ENCODE measurements at regions of chr5 and their contacts with region 1.

Region 1: DNA sequence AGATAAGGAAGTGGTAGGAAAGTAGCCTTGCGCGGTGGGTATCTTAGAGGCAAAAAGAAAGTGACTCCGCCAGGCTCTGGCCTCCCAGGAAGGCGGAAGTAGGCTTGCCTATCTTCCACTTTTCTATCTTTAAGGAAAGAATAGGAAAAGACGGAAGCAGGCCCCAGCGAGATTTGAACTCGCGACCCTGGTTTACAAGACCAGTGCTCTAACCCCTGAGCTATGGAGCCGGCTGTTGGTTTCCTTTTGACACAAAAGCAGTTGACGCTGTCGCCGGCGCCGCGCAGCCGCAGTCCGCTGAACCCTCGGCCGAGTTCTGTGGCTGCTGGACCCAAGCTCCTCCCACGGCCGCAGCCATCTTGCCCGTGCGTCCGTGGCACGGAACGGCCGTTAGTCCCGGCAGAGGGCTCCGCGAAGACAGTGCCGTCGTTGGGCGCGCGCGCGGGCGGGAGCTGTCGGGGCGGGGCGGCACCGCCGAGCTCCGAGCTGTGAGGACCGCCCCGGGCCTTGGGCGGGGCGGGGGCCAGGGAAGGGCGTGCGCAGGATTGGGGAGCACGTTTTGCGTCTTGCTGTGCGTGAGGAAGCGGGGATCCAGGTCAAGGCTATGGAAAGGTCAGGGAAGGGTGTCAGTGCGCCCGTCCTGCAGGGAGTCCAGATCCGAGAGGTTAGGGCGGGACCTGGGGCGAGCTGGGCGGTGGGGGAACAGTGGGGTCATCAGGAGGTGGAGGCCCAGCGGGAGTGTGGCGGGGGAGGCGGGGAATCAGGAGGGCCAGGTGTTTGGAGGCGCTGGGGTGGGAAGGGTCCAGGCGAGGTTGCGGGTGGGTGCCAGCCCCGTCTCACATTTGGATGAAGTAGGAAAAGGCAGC is 13.2 kb downstream of the TRIM7 start:
- DNase-seq: peak; percentile 94
- ATAC-seq: peak; percentile 77
- H3K4me3 ChIP-seq: peak overlapping the region; percentile 65
- H3K27ac ChIP-seq: peak overlapping the region; percentile 91
- H3K4me1 ChIP-seq: peaks cover 4% of the 10 kb centered on the region
- H3K27me3 ChIP-seq: no peaks in the 10 kb centered on the region
- CTCF ChIP-seq: no peak
- POLR2A ChIP-seq: peak; percentile 43; the same call in 1 of the 2 replicates
- RAD21 ChIP-seq: 0 out of 2 replicates have a peak, but pooled peaks have one; percentile 6

Region 2: GRCh38 chr5:181008136-181008535 is 183.6 kb before region 1 on chr5:
- CTCF ChIA-PET with region 1: no interaction called
- POLR2A ChIA-PET with region 1: no interaction called
- dilution Hi-C with region 1: no loop called
- in situ Hi-C with region 1: no loop called
- intact Hi-C with region 1: no loop called
- DNase-seq: no peak
- ATAC-seq: no peak
- H3K4me3 ChIP-seq: no peak overlapping the region
- H3K27ac ChIP-seq: no peak overlapping the region
- H3K4me1 ChIP-seq: no peaks in the 10 kb centered on the region
- H3K27me3 ChIP-seq: no peaks in the 10 kb centered on the region
- CTCF ChIP-seq: no peak
- POLR2A ChIP-seq: no peak
- RAD21 ChIP-seq: no peak

Region 3: GRCh38 chr5:181207214-181208107 is 15.7 kb after region 1 on chr5:
- CTCF ChIA-PET with region 1: interaction called, 10 read pairs
- POLR2A ChIA-PET with region 1: no interaction called
- dilution Hi-C with region 1: no loop called
- in situ Hi-C with region 1: no loop called
- intact Hi-C with region 1: loop called (anchors 1 kb)
- DNase-seq: peak; percentile 93
- ATAC-seq: peak; percentile 77
- H3K4me3 ChIP-seq: peak overlapping the region; percentile 72
- H3K27ac ChIP-seq: peak overlapping the region; percentile 42
- H3K4me1 ChIP-seq: peaks cover 4% of the 10 kb centered on the region; the same call in 1 of the 2 replicates
- H3K27me3 ChIP-seq: no peaks in the 10 kb centered on the region; the same call in 1 of the 2 replicates
- CTCF ChIP-seq: no peak
- POLR2A ChIP-seq: no peak
- RAD21 ChIP-seq: no peak

Region 4: DNA sequence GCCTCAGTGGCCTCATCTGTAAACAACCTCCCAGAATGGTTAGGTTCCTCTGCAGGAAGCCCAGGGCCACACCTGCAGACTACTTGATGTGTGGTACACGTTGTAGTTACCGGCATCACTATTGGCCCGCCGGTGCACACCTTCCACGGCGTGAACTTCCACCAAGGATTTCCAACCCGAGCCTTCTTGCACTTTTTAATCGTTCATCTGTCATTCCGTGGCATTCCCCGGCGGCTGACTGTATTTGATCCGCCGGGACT is 26.0 kb after region 1 on chr5:
- CTCF ChIA-PET with region 1: interaction called, 3 read pairs
- POLR2A ChIA-PET with region 1: no interaction called
- dilution Hi-C with region 1: no loop called
- in situ Hi-C with region 1: no loop called
- intact Hi-C with region 1: loop called (anchors 1 kb)
- DNase-seq: no peak
- ATAC-seq: no peak
- H3K4me3 ChIP-seq: peak overlapping the region; percentile 55
- H3K27ac ChIP-seq: no peak overlapping the region
- H3K4me1 ChIP-seq: 0 out of 2 replicates have a peak, but pooled peaks cover 2% of the 10 kb centered on the region
- H3K27me3 ChIP-seq: no peaks in the 10 kb centered on the region; the same call in 1 of the 2 replicates
- CTCF ChIP-seq: no peak
- POLR2A ChIP-seq: no peak
- RAD21 ChIP-seq: no peak

Region 5: GRCh38 chr5:181223058-181223728 is 31.4 kb after region 1 on chr5 and contains the start of gene TRIM41:
- CTCF ChIA-PET with region 1: interaction called, 3 read pairs
- POLR2A ChIA-PET with region 1: no interaction called
- dilution Hi-C with region 1: no loop called
- in situ Hi-C with region 1: no loop called
- intact Hi-C with region 1: loop called (anchors 1 kb)
- DNase-seq: peak; percentile 98
- ATAC-seq: peak; percentile 78
- H3K4me3 ChIP-seq: peak within 1 kb of the TSS; percentile 82
- H3K27ac ChIP-seq: peak within 1 kb of the TSS; percentile 92
- H3K4me1 ChIP-seq: peaks cover 6% of the 10 kb centered on the region
- H3K27me3 ChIP-seq: no peaks in the 10 kb centered on the region
- CTCF ChIP-seq: peak; percentile 30; the same call in 1 of the 2 replicates
- POLR2A ChIP-seq: peak; percentile 95
- RAD21 ChIP-seq: peak; percentile 33
- total RNA-seq, gene TRIM41: 5.9 and 6.9 TPM in 2 replicates

Region 6: DNA sequence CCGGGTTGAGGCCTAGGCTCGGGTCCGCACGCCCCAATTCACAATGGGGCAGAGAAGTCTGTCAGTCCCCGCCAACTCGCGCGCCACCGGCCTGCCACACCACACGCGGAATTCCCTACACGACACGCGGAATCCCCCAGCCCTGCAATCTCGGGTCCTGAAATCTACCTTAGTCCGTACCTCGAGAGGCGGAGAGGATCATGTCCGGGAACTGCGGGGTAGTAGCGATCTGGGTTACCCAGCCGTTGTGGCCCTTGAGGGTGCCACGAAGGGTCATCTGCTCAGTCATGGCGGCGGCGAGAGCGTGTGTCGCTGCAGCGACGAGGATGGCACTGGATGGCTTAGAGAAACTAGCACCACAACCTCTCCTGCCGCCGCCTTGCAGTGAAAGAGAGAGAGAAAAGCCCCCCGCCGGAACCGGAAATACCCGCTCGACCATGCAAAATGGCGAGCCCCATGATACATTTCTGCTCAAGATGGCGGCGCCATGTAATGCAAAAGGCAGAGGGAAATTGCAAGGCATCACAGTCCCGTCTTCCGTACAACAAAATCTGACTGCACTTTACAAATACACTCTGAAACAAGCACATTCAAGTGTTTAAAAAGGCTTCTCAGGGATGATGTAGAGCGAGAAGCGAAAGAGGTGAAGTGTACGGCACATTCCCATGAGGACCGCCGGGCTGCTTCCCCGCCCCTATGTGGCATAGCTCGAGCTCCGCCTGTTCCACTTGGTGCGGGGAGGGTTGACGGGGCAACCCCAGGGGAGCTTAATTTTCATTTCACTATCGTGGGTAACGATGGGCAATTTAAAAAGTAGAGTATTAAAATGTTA is 52.0 kb after region 1 on chr5 and contains the start of gene RACK1:
- CTCF ChIA-PET with region 1: no interaction called
- POLR2A ChIA-PET with region 1: no interaction called
- dilution Hi-C with region 1: no loop called
- in situ Hi-C with region 1: no loop called
- intact Hi-C with region 1: loop called (anchors 1 kb)
- DNase-seq: peak; percentile 85
- ATAC-seq: peak; percentile 67
- H3K4me3 ChIP-seq: peak within 1 kb of the TSS; percentile 85
- H3K27ac ChIP-seq: peak within 1 kb of the TSS; percentile 88
- H3K4me1 ChIP-seq: peaks cover 18% of the 10 kb centered on the region
- H3K27me3 ChIP-seq: no peaks in the 10 kb centered on the region
- CTCF ChIP-seq: no peak
- POLR2A ChIP-seq: peak; percentile 97
- RAD21 ChIP-seq: no peak
- total RNA-seq, gene RACK1: 5,432 and 9,350 TPM in 2 replicates

Region 7: DNA sequence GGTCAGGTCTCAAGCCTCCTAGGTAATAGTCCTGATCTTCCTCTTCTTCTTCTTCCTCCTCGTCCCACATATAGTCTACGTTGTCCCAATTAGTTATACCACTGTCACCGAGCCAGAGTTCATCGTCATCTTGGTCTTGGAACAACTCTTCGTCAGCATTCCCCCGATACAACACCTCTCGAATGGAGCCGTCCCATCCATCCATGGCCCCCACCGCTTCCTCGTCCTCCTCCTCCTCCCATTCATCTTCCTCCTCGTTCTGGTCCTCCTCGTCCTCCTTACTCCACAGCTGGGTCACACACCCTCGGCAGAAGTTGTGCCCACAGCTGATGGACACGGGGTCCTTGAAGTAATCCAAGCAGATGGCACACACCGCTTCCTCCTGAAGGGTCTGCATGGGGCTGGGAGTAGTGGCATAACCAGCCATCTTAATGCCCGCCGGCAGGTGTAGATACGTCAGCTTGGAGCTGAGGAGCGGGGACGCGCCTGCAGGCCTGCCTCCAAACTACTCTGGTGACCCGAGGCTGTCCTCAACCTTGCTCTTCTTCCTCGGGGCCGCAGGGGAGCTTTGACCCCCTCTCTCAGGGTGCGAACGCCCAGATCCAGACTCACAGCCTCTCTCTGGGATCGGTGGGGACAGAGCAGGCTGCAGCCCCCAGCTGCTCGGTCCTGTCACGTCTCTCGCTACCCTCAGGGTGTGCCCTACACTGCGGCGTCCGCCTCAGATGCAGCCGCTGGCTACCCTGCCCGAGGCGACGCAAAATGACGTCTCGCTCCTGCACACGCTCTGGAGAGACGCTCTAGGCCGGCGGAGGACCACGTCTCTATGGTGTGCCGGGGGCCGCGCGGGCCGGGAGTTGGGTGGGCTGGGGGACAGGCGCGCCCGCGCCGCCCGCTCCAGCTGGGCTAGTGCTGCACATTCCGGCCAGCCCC is 68.9 kb after region 1 on chr5 and contains the start of gene TRIM52:
- CTCF ChIA-PET with region 1: no interaction called
- POLR2A ChIA-PET with region 1: no interaction called
- dilution Hi-C with region 1: no loop called
- in situ Hi-C with region 1: loop called (anchors 5 kb)
- intact Hi-C with region 1: loop called (anchors 5 kb)
- DNase-seq: peak; percentile 87
- ATAC-seq: peak; percentile 87
- H3K4me3 ChIP-seq: peak within 1 kb of the TSS; percentile 95
- H3K27ac ChIP-seq: peak within 1 kb of the TSS; percentile 97
- H3K4me1 ChIP-seq: peaks cover 2% of the 10 kb centered on the region; the same call in 1 of the 2 replicates
- H3K27me3 ChIP-seq: no peaks in the 10 kb centered on the region
- CTCF ChIP-seq: 0 out of 2 replicates have a peak, but pooled peaks have one; percentile 1
- POLR2A ChIP-seq: peak; percentile 77; the same call in 1 of the 2 replicates
- RAD21 ChIP-seq: no peak; the same call in 1 of the 2 replicates
- total RNA-seq, gene TRIM52: 2.3 and 3.9 TPM in 2 replicates

Measured in IMR-90 (cell line).